Endothelial cell of umbilical vein (primary cell): ENCODE measurements at regions of chr5 and their contacts with region 1.

Region 1: GRCh38 chr5:39691993-39692392 is 267.2 kb upstream of the DAB2 start:
- DNase-seq: peak; percentile 5
- H3K4me3 ChIP-seq: no peak overlapping the region
- H3K27ac ChIP-seq: no peak overlapping the region
- H3K4me1 ChIP-seq: no peaks in the 10 kb centered on the region
- H3K27me3 ChIP-seq: no peaks in the 10 kb centered on the region
- CTCF ChIP-seq: peak in 1 of 2 donors; percentile 16
- POLR2A ChIP-seq: no peak

Region 2: DNA sequence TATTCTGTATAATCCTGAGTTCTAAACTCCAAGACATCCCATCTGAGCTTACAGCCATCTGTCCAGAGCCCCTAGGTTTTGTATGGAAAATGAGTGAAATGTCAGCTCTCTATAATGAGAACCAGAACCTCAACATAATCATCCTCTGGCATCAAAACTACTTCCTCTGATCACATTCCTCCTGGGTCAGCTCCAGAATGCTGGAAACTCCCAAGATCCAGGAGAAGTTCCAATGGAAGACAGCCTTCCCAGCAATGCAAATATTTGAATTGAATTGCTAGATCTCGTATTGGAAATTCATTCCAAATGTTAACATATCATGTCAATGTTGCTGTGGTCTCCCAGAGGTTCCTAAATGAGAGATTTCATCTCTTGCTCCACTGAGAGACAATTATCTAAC is 351.5 kb before region 1 on chr5:
- CTCF ChIA-PET with region 1: no interaction called
- POLR2A ChIA-PET with region 1: no interaction called
- dilution Hi-C with region 1: no loop called
- intact Hi-C with region 1: no loop called
- DNase-seq: no peak
- H3K4me3 ChIP-seq: no peak overlapping the region
- H3K27ac ChIP-seq: no peak overlapping the region
- H3K4me1 ChIP-seq: no peaks in the 10 kb centered on the region
- H3K27me3 ChIP-seq: no peaks in the 10 kb centered on the region
- CTCF ChIP-seq: no peak
- POLR2A ChIP-seq: no peak

Region 3: GRCh38 chr5:39599721-39600431 is 92.1 kb before region 1 on chr5:
- CTCF ChIA-PET with region 1: interaction called, 4 read pairs
- POLR2A ChIA-PET with region 1: no interaction called
- dilution Hi-C with region 1: no loop called
- intact Hi-C with region 1: loop called (anchors 5 kb)
- DNase-seq: peak; percentile 43
- H3K4me3 ChIP-seq: no peak overlapping the region
- H3K27ac ChIP-seq: no peak overlapping the region
- H3K4me1 ChIP-seq: no peaks in the 10 kb centered on the region
- H3K27me3 ChIP-seq: no peaks in the 10 kb centered on the region
- CTCF ChIP-seq: peak; percentile 21 to 28
- POLR2A ChIP-seq: no peak

Region 4: GRCh38 chr5:39624268-39624886 is 67.6 kb before region 1 on chr5:
- CTCF ChIA-PET with region 1: no interaction called
- POLR2A ChIA-PET with region 1: no interaction called
- dilution Hi-C with region 1: no loop called
- intact Hi-C with region 1: no loop called
- DNase-seq: no peak
- H3K4me3 ChIP-seq: no peak overlapping the region
- H3K27ac ChIP-seq: no peak overlapping the region
- H3K4me1 ChIP-seq: no peaks in the 10 kb centered on the region
- H3K27me3 ChIP-seq: no peaks in the 10 kb centered on the region
- CTCF ChIP-seq: no peak
- POLR2A ChIP-seq: no peak

Region 5: GRCh38 chr5:39648532-39649213 is 43.3 kb before region 1 on chr5:
- CTCF ChIA-PET with region 1: no interaction called
- POLR2A ChIA-PET with region 1: no interaction called
- dilution Hi-C with region 1: no loop called
- intact Hi-C with region 1: loop called (anchors 5 kb)
- DNase-seq: peak; percentile 20
- H3K4me3 ChIP-seq: no peak overlapping the region
- H3K27ac ChIP-seq: no peak overlapping the region
- H3K4me1 ChIP-seq: peaks cover 11% of the 10 kb centered on the region
- H3K27me3 ChIP-seq: no peaks in the 10 kb centered on the region
- CTCF ChIP-seq: no peak
- POLR2A ChIP-seq: no peak